AG04449 (cell line): ENCODE measurements at regions of chr16 and their contacts with region 1.

Region 1: GRCh38 chr16:75432828-75433731 is at the start of gene CFDP1:
- DNase-seq: peak; percentile 44
- H3K4me3 ChIP-seq: peak within 1 kb of the TSS; percentile 94
- CTCF ChIP-seq: no peak

Region 2: GRCh38 chr16:75443298-75443697 is 10.2 kb after region 1 on chr16:
- CTCF ChIA-PET with region 1: interaction called, 11 read pairs
- POLR2A ChIA-PET with region 1: interaction called, 3 read pairs
- DNase-seq: peak; percentile 66
- H3K4me3 ChIP-seq: no peak overlapping the region
- CTCF ChIP-seq: no peak